ENCODE measurements at regions of chr13 and their contacts with region 1.

Region 1: GRCh38 chr13:43905435-43906031 is 25.8 kb downstream of the LACC1 start:
- DNase-seq: peak; percentile 76
- H3K4me3 ChIP-seq: no peak overlapping the region
- H3K27ac ChIP-seq: no peak overlapping the region
- H3K4me1 ChIP-seq: no peaks in the 10 kb centered on the region
- H3K27me3 ChIP-seq: no peaks in the 10 kb centered on the region
- CTCF ChIP-seq: peak; percentile 78

Region 2: GRCh38 chr13:42786715-42787114 is 1118.8 kb before region 1 on chr13:
- CTCF ChIA-PET with region 1: no interaction called
- POLR2A ChIA-PET with region 1: no interaction called
- intact Hi-C with region 1: no loop called
- DNase-seq: no peak
- H3K4me3 ChIP-seq: no peak overlapping the region
- H3K27ac ChIP-seq: no peak overlapping the region
- H3K4me1 ChIP-seq: no peaks in the 10 kb centered on the region
- H3K27me3 ChIP-seq: no peaks in the 10 kb centered on the region
- CTCF ChIP-seq: no peak

Region 3: GRCh38 chr13:43744256-43745031 is 161.1 kb before region 1 on chr13:
- CTCF ChIA-PET with region 1: no interaction called
- POLR2A ChIA-PET with region 1: no interaction called
- intact Hi-C with region 1: no loop called
- DNase-seq: peak; percentile 15
- H3K4me3 ChIP-seq: no peak overlapping the region
- H3K27ac ChIP-seq: no peak overlapping the region
- H3K4me1 ChIP-seq: no peaks in the 10 kb centered on the region
- H3K27me3 ChIP-seq: no peaks in the 10 kb centered on the region
- CTCF ChIP-seq: no peak

Region 4: GRCh38 chr13:44050450-44051063 is 145.0 kb after region 1 on chr13:
- CTCF ChIA-PET with region 1: interaction called, 14 read pairs
- POLR2A ChIA-PET with region 1: no interaction called
- intact Hi-C with region 1: loop called (anchors 1 kb)
- DNase-seq: peak; percentile 36
- H3K4me3 ChIP-seq: no peak overlapping the region
- H3K27ac ChIP-seq: no peak overlapping the region
- H3K4me1 ChIP-seq: no peaks in the 10 kb centered on the region
- H3K27me3 ChIP-seq: peaks cover 5% of the 10 kb centered on the region
- CTCF ChIP-seq: peak; percentile 72

Region 5: GRCh38 chr13:44470638-44471562 is 565.4 kb after region 1 on chr13:
- CTCF ChIA-PET with region 1: no interaction called
- POLR2A ChIA-PET with region 1: no interaction called
- intact Hi-C with region 1: loop called (anchors 2 kb)
- DNase-seq: peak; percentile 42
- H3K4me3 ChIP-seq: no peak overlapping the region
- H3K27ac ChIP-seq: no peak overlapping the region
- H3K4me1 ChIP-seq: peaks cover 18% of the 10 kb centered on the region
- H3K27me3 ChIP-seq: no peaks in the 10 kb centered on the region
- CTCF ChIP-seq: peak; percentile 63

Region 6: GRCh38 chr13:44969551-44970484 is 1064.3 kb after region 1 on chr13:
- CTCF ChIA-PET with region 1: no interaction called
- POLR2A ChIA-PET with region 1: no interaction called
- intact Hi-C with region 1: loop called (anchors 5 kb)
- DNase-seq: peak; percentile 71
- H3K4me3 ChIP-seq: no peak overlapping the region
- H3K27ac ChIP-seq: no peak overlapping the region
- H3K4me1 ChIP-seq: peaks cover 16% of the 10 kb centered on the region
- H3K27me3 ChIP-seq: no peaks in the 10 kb centered on the region
- CTCF ChIP-seq: peak; percentile 89

Region 7: DNA sequence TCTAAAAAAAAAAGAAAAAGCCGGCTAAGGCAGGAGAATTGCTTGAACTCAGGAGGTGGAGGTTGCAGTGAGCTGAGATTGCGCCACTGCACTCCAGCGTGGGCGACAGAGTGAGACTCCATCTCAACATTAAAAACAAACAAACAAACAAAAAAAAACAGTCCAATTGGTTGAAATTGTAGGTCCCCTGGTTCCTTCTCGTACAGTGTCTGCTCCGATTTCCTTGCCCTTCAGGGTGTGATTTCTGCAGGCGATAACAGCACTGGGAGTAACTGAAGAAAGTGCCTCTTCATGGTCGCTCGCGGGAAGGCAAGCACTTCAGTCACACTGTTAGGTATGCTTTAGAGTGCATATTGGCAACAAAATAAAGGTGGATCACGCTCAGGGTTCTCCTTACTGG is 1395.7 kb after region 1 on chr13:
- CTCF ChIA-PET with region 1: no interaction called
- POLR2A ChIA-PET with region 1: no interaction called
- intact Hi-C with region 1: loop called (anchors 10 kb)
- DNase-seq: no peak
- H3K4me3 ChIP-seq: no peak overlapping the region
- H3K27ac ChIP-seq: no peak overlapping the region
- H3K4me1 ChIP-seq: no peaks in the 10 kb centered on the region
- H3K27me3 ChIP-seq: no peaks in the 10 kb centered on the region
- CTCF ChIP-seq: no peak

Measured in A673 (cell line).